CD8-positive, alpha-beta T cell (primary cell): ENCODE measurements at regions of chr2 and their contacts with region 1.

Region 1: GRCh38 chr2:96116879-96117697 is 717 bp upstream of the ADRA2B start:
- DNase-seq: peak; percentile 31 to 81 (median 61)
- ATAC-seq: peak; percentile 72
- H3K4me3 ChIP-seq: peak overlapping the region; percentile 7 to 50
- H3K4me3 Mint-ChIP-seq: peak overlapping the region; percentile 76
- H3K27ac ChIP-seq: no peak overlapping the region
- H3K27ac Mint-ChIP-seq: peak overlapping the region; percentile 74
- H3K4me1 ChIP-seq: peaks cover 8% of the 10 kb centered on the region
- H3K4me1 Mint-ChIP-seq: peaks cover 12% of the 10 kb centered on the region
- H3K27me3 ChIP-seq: peaks cover 0 to 3% of the 10 kb centered on the region in 2 experiments
- H3K27me3 Mint-ChIP-seq: peaks cover 23% of the 10 kb centered on the region
- CTCF ChIP-seq: peak; percentile 84

Region 2: GRCh38 chr2:95670167-95670566 is 446.9 kb before region 1 on chr2:
- CTCF ChIA-PET with region 1: no interaction called
- POLR2A ChIA-PET with region 1: no interaction called
- intact Hi-C with region 1: no loop called
- DNase-seq: no peak
- ATAC-seq: no peak
- H3K4me3 ChIP-seq: no peak overlapping the region
- H3K4me3 Mint-ChIP-seq: no peak overlapping the region
- H3K27ac ChIP-seq: no peak overlapping the region
- H3K27ac Mint-ChIP-seq: no peak overlapping the region
- H3K4me1 ChIP-seq: peaks cover 8% of the 10 kb centered on the region
- H3K4me1 Mint-ChIP-seq: peaks cover 17% of the 10 kb centered on the region
- H3K27me3 ChIP-seq: no peaks in the 10 kb centered on the region
- H3K27me3 Mint-ChIP-seq: no peaks in the 10 kb centered on the region
- CTCF ChIP-seq: no peak

Region 3: DNA sequence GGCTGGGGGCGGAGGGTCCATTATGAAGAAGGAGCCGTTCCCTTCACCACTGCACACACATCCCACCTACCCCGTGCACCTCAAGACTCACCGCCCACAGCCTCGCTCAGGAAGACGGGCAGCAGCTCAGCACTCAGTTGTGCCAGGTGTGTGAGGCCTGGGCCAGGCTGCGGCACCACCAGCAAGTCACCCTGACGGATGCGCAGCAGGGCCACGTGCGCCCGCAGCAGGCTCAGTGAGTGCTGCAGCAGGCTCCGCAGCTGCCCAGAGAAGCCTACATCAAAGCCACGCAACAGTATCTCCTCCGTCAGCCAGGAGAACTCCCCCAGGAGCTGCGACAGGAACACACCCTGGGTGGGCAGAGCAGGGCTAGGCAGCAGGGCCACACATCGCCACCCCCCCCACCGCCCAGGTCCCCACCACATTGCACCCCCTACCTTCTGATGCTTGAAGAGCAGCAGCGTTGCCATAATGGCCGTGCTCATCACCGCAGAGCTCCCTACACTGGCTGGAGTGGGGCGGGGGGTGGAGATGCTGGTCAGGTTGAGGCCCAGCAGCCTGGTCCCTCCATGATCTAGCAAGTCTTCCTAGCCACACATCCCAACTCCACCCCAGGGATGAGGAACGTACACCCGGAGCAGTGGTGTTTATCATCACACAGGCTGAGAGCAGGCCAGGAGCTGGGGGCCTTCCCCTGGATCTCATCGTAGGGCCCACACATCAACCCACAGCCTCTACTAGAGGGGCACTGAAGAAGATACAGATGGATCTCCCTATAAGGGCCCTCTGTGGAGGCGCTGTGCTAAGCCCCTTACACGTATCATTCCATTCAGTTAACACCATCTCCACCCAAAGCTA is 92.5 kb before region 1 on chr2:
- CTCF ChIA-PET with region 1: interaction called, 10 read pairs
- POLR2A ChIA-PET with region 1: no interaction called
- intact Hi-C with region 1: no loop called
- DNase-seq: peak in 1 of 9 experiments; percentile 3
- ATAC-seq: no peak
- H3K4me3 ChIP-seq: no peak overlapping the region
- H3K4me3 Mint-ChIP-seq: no peak overlapping the region
- H3K27ac ChIP-seq: no peak overlapping the region
- H3K27ac Mint-ChIP-seq: no peak overlapping the region
- H3K4me1 ChIP-seq: no peaks in the 10 kb centered on the region
- H3K4me1 Mint-ChIP-seq: peaks cover 2% of the 10 kb centered on the region
- H3K27me3 ChIP-seq: no peaks in the 10 kb centered on the region
- H3K27me3 Mint-ChIP-seq: no peaks in the 10 kb centered on the region
- CTCF ChIP-seq: no peak

Region 4: DNA sequence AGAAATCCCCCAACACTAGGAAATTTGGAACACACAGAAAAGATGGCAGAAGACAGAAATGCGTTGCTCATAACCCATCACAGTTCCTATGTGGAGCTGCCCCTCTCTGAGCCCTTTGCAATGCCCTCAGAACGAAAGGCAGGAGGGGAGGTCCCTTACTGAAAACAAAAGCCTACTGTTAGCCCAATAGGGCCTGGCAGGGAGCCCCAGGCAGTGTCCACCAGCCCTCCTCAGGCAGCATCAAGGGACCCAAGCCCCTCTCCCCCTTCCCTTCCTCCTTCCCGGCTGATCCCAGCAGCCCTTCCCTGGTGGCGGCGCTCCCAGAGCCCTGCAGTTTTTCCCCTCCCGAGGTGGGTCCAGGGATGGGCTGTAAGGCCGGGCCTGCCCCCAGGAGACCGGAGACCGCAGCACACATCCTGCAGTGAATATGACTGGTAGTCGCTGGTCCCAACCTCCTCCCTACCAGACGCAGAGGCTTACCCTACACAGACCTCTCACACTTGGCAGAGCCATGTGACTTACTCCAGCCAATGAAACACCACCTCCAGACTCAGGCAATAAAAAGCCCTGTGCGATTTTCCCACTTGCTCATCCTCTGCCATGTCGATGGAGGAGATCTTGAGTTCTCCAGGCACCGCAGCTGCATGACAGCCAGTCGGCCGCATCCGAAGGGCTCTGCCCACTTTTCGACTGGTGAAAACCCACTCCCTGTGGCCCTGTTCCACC is 47.5 kb after region 1 on chr2:
- CTCF ChIA-PET with region 1: interaction called, 4 read pairs
- POLR2A ChIA-PET with region 1: no interaction called
- intact Hi-C with region 1: loop called in 1 of 2 experiments (anchors 2 kb)
- DNase-seq: peak in 6 of 9 experiments; percentile 52 to 91 (median 80)
- ATAC-seq: peak; percentile 72
- H3K4me3 ChIP-seq: peak overlapping the region; percentile 25 to 37
- H3K4me3 Mint-ChIP-seq: peak overlapping the region; percentile 78
- H3K27ac ChIP-seq: peak overlapping the region; percentile 63 to 95
- H3K27ac Mint-ChIP-seq: peak overlapping the region; percentile 98
- H3K4me1 ChIP-seq: peaks cover 47% of the 10 kb centered on the region
- H3K4me1 Mint-ChIP-seq: peaks cover 60% of the 10 kb centered on the region
- H3K27me3 ChIP-seq: no peaks in the 10 kb centered on the region
- H3K27me3 Mint-ChIP-seq: no peaks in the 10 kb centered on the region
- CTCF ChIP-seq: no peak